ENCODE measurements at regions of chr2 and their contacts with region 1.

Region 1: DNA sequence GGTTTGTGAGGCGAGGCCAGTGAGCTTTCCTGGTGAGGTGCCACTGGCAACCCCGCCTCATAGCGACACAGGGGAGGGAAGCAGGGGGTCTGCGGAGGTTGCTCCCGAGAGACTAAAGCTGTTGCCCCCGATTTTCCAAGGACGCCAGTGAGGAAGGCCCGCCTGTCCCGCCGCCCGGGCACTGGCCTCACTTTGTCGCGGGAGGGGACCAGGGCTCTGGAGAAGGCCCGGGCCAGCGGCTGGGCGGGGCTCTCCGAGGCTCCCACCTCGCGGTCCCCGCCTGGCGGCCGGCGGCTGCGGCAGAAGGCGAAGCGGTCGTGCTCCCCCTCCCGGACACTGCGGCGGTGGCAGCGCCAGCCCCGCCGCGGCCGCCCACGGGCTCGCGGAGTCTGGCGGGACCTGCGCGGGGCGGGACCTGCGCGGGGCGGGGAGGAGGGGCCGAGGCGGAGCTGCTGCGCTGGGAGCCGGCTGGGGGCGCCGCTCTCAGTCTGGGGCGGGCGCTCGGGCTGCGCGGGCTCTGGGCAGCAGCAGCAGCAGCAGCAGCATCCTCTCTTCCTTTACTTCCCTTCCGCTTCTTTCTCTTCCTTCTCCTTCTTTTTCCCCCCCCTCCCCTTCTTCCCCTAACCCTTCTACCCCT is at the start of gene MAP2:
- DNase-seq: peak; percentile 88
- H3K4me3 ChIP-seq: peak within 1 kb of the TSS; percentile 77 to 95 (median 85)
- H3K27ac ChIP-seq: peak within 1 kb of the TSS; percentile 51
- H3K4me1 ChIP-seq: peaks cover 12% of the 10 kb centered on the region
- H3K27me3 ChIP-seq: peaks cover 0 to 2% of the 10 kb centered on the region in 2 experiments
- CTCF ChIP-seq: peak; percentile 86 to 91
- POLR2A ChIP-seq: peak; percentile 33
- total RNA-seq, gene MAP2: 46.1 and 61.2 TPM in 2 replicates

Region 2: GRCh38 chr2:209305026-209305425 is 118.7 kb before region 1 on chr2:
- CTCF ChIA-PET with region 1: no interaction called
- POLR2A ChIA-PET with region 1: no interaction called
- dilution Hi-C with region 1: no loop called
- intact Hi-C with region 1: no loop called
- DNase-seq: no peak
- H3K4me3 ChIP-seq: no peak overlapping the region
- H3K27ac ChIP-seq: no peak overlapping the region
- H3K4me1 ChIP-seq: no peaks in the 10 kb centered on the region
- H3K27me3 ChIP-seq: no peaks in the 10 kb centered on the region
- CTCF ChIP-seq: no peak
- POLR2A ChIP-seq: no peak

Region 3: DNA sequence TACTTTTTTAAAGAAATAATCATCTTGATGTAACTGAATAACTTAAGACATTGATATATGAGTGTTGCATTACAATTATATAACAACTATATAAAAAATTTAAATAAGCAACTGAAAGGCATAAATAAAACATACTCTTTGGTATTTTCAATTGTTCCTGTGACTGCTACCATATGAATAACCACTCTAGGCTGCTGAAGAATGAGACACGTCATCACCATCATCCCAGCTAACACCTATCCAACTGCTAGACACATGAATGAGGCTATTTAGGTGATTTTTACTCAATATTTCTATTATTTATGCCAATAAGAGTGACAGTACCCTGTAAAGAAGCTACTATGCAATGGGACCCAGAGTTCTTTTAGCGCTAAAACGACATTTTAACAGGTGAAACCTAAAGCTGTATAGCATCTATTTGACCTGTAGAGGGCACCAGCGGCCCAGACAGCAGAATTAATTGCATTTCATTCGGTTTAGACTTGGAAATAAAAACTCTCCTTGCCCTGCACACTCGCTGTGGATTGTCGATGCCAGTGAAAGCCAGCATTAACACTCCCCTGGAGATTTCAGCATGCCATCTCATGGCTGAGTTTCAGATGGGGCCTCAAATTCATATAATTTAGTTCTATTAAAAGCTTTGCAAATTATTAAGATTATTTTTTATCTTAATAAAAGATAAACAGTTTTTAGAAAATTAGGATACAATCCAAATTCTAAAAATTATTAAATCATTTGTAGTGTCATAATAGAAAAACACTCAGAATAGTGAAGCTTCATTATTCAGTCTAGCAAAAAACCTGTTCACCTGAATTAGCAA is 89.3 kb before region 1 on chr2:
- CTCF ChIA-PET with region 1: interaction called, 254 read pairs
- POLR2A ChIA-PET with region 1: interaction called, 4 read pairs
- dilution Hi-C with region 1: no loop called
- intact Hi-C with region 1: loop called (anchors 1 kb)
- DNase-seq: peak; percentile 69
- H3K4me3 ChIP-seq: no peak overlapping the region
- H3K27ac ChIP-seq: no peak overlapping the region
- H3K4me1 ChIP-seq: no peaks in the 10 kb centered on the region
- H3K27me3 ChIP-seq: peaks cover 1 to 2% of the 10 kb centered on the region in 2 experiments
- CTCF ChIP-seq: peak; percentile 73 to 78
- POLR2A ChIP-seq: no peak

Region 4: GRCh38 chr2:209473930-209474419 is 50.3 kb after region 1 on chr2:
- CTCF ChIA-PET with region 1: interaction called, 60 read pairs
- POLR2A ChIA-PET with region 1: no interaction called
- dilution Hi-C with region 1: no loop called
- intact Hi-C with region 1: loop called (anchors 1 kb)
- DNase-seq: peak; percentile 80
- H3K4me3 ChIP-seq: no peak overlapping the region
- H3K27ac ChIP-seq: peak overlapping the region; percentile 54
- H3K4me1 ChIP-seq: peaks cover 42% of the 10 kb centered on the region
- H3K27me3 ChIP-seq: no peaks in the 10 kb centered on the region
- CTCF ChIP-seq: no peak
- POLR2A ChIP-seq: no peak

Region 5: GRCh38 chr2:209525834-209526281 is 102.2 kb after region 1 on chr2:
- CTCF ChIA-PET with region 1: interaction called, 62 read pairs
- POLR2A ChIA-PET with region 1: no interaction called
- dilution Hi-C with region 1: no loop called
- intact Hi-C with region 1: loop called (anchors 1 kb)
- DNase-seq: peak; percentile 91
- H3K4me3 ChIP-seq: peak overlapping the region in 1 of 3 experiments; percentile 72
- H3K27ac ChIP-seq: peak overlapping the region; percentile 99
- H3K4me1 ChIP-seq: peaks cover 37% of the 10 kb centered on the region
- H3K27me3 ChIP-seq: no peaks in the 10 kb centered on the region
- CTCF ChIP-seq: no peak
- POLR2A ChIP-seq: no peak

Region 6: DNA sequence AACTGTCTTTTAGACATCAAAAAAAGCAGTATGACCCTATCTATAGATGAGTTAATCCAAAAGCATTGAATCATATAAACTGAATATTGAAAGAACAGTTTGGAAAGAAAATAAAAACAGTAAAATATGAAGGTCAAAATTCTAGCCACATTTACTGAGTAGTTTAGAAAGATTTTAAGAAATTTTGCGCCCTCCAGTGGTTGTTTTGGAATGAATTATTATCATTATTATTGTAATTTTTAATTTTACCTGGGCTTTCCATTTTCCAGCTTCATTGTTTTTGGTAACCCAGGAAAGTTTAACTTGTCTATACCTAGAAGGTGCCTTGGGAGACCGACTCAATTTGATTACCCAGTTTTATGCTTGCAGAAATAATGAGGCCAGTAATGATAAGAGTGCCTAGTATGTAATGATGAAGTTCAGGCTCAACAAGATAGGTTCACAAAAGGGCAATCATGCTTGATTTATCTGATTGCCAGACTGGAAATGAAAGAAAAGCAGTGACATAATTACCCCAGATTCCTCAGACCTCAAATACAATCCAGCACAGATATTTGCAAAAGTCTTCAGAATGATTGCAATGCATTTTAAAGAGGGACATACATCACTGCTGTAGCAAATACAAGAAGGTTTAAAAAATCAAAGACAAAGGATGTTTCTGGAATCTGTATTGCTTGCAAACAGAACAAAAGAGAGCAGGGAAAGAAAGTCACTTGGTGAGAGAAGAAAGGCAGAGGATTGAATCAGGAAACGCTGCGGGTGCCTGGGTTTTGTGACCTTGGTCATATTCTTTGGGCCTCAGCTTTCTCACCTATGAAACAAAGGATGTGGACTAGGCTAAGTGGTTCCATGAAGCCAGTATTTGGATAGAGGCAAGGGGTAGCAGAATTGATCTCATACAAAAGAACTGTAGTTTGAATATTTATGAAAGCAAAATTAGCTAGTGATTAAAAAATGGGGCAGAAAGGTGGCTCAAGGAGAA is 154.0 kb after region 1 on chr2:
- CTCF ChIA-PET with region 1: interaction called, 142 read pairs
- POLR2A ChIA-PET with region 1: interaction called, 3 read pairs
- dilution Hi-C with region 1: no loop called
- intact Hi-C with region 1: loop called (anchors 1 kb)
- DNase-seq: peak; percentile 14
- H3K4me3 ChIP-seq: no peak overlapping the region
- H3K27ac ChIP-seq: no peak overlapping the region
- H3K4me1 ChIP-seq: no peaks in the 10 kb centered on the region
- H3K27me3 ChIP-seq: no peaks in the 10 kb centered on the region
- CTCF ChIP-seq: peak in 1 of 2 donors; percentile 12
- POLR2A ChIP-seq: no peak

Region 7: GRCh38 chr2:210195101-210195852 is 771.6 kb after region 1 on chr2:
- CTCF ChIA-PET with region 1: interaction called, 16 read pairs
- POLR2A ChIA-PET with region 1: no interaction called
- dilution Hi-C with region 1: no loop called
- intact Hi-C with region 1: no loop called
- DNase-seq: peak; percentile 65
- H3K4me3 ChIP-seq: peak overlapping the region; percentile 13 to 76 (median 45)
- H3K27ac ChIP-seq: no peak overlapping the region
- H3K4me1 ChIP-seq: peaks cover 14% of the 10 kb centered on the region
- H3K27me3 ChIP-seq: peaks cover 0 to 3% of the 10 kb centered on the region in 2 experiments
- CTCF ChIP-seq: peak; percentile 31 to 45
- POLR2A ChIP-seq: no peak

Region 8: GRCh38 chr2:210617732-210618330 is 1194.2 kb after region 1 on chr2:
- CTCF ChIA-PET with region 1: no interaction called
- POLR2A ChIA-PET with region 1: no interaction called
- dilution Hi-C with region 1: no loop called
- intact Hi-C with region 1: no loop called
- DNase-seq: peak; percentile 37
- H3K4me3 ChIP-seq: no peak overlapping the region
- H3K27ac ChIP-seq: no peak overlapping the region
- H3K4me1 ChIP-seq: no peaks in the 10 kb centered on the region
- H3K27me3 ChIP-seq: no peaks in the 10 kb centered on the region
- CTCF ChIP-seq: peak; percentile 33 to 52
- POLR2A ChIP-seq: no peak